PC-9 (cell line): ENCODE measurements at regions of chr6 and their contacts with region 1.

Region 1: GRCh38 chr6:82247634-82248232 is at the start of gene IBTK:
- DNase-seq: peak; percentile 85 to 96
- H3K4me3 ChIP-seq: peak within 1 kb of the TSS; percentile 90
- H3K27ac ChIP-seq: peak within 1 kb of the TSS; percentile 89
- H3K4me1 ChIP-seq: peaks cover 19% of the 10 kb centered on the region
- H3K27me3 ChIP-seq: no peaks in the 10 kb centered on the region
- CTCF ChIP-seq: no peak
- total RNA-seq, gene IBTK: 23.1 and 25.9 TPM in 2 replicates

Region 2: DNA sequence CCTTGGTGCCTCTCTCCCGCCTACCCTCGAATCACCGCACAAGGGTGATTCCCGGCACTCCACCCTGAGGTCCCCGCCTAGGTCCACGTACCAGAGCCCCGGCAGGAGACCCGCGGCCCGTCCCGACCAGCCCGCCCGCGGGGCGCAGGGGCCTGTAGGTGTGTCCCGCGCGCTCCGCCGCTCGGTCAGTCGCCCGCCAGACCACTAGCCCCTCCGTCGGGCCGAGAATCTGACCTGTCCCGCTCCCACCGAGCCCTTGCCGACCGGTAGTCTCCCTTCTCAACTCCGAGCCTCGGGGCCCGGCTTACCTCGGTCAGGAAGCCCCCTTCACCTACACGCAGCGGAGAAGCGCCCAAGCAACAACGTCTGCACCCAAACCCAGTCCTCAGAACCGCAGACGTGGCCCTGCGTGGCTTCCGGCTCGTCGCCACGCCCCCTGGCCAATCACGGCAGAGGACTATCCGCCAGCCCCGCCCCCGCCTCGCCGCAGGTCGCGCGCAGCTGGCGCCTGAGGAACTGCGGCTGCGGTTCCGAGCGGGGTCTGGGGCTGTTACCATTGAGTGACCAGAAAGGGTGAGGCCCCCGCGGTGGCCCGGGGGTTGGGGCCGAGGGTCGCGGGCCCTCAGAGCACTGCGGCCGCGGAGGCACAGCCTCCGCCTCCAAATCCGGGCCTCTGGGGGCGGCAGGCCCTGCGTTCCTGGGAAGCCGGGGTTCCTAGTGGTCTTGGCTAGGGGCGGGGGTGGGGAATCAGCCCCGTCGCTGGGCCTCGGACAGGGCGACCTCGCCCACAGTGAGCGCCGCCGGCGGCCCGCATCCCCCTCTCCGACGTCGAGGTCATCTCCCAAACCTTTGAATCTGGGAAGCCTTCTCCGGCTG is 945.4 kb after region 1 on chr6 and contains the starts of genes PGM3 and RWDD2A:
- CTCF ChIA-PET with region 1: no interaction called
- POLR2A ChIA-PET with region 1: no interaction called
- intact Hi-C with region 1: loop called (anchors 10 kb)
- DNase-seq: peak; percentile 58 to 85
- H3K4me3 ChIP-seq: peak within 1 kb of the TSS; percentile 77
- H3K27ac ChIP-seq: no peak within 1 kb of the TSS
- H3K4me1 ChIP-seq: peaks cover 3% of the 10 kb centered on the region; the same call in 1 of the 2 replicates
- H3K27me3 ChIP-seq: no peaks in the 10 kb centered on the region
- CTCF ChIP-seq: no peak
- total RNA-seq, gene PGM3: 22.1 and 33.8 TPM in 2 replicates
- total RNA-seq, gene RWDD2A: 1.8 and 2.1 TPM in 2 replicates